ENCODE measurements at regions of chr5 and their contacts with region 1.

Region 1: DNA sequence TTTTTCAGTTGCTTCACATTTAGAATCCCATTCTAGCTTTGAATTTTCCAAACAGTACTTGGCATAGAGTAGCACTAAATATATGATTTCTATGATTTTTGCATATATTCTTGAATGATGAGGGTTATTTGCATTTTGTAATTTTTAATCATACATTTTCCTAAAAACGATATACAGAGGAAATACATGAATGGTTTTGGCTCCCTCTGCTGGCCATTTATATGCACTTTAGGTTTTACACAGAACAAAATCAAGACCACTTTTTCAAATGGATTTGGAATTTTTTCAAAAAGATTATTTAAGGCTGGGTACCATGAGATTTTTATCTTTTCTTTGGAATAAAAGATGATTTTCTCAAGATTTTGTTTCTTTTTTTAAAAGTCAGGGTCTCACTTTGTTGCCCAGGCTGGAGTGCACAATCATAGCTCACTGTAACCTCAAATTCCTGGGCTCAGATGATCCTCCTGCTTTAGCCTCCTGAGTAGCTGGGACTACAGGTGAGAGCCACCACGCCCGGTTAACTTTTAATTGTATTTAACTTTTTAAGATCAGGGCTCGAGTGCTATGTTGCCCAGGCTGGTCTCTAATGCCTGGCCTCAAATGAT is 16.7 kb upstream of the COMMD10 start:
- DNase-seq: peak; percentile 29 to 74 (median 36)
- ATAC-seq: peak; percentile 81
- H3K4me3 ChIP-seq: no peak overlapping the region
- H3K27ac ChIP-seq: no peak overlapping the region
- H3K4me1 ChIP-seq: no peaks in the 10 kb centered on the region
- H3K27me3 ChIP-seq: peaks cover 0 to 6% of the 10 kb centered on the region in 2 experiments; a peak in 2 of 5 replicates
- CTCF ChIP-seq: peak; percentile 45 to 83 (median 47); a peak in 4 of 6 replicates
- EP300 ChIP-seq: no peak
- POLR2A ChIP-seq: no peak
- RAD21 ChIP-seq: peak; percentile 85 to 86

Region 2: GRCh38 chr5:115309751-115310370 is 758.3 kb before region 1 on chr5:
- CTCF ChIA-PET with region 1: interaction called, 7 read pairs
- POLR2A ChIA-PET with region 1: no interaction called
- in situ Hi-C with region 1: no loop called
- intact Hi-C with region 1: loop called (anchors 5 kb)
- DNase-seq: peak in 3 of 4 experiments; percentile 12 to 49 (median 15)
- ATAC-seq: peak; percentile 70
- H3K4me3 ChIP-seq: no peak overlapping the region
- H3K27ac ChIP-seq: no peak overlapping the region
- H3K4me1 ChIP-seq: no peaks in the 10 kb centered on the region
- H3K27me3 ChIP-seq: no peaks in the 10 kb centered on the region
- CTCF ChIP-seq: peak in 1 of 3 experiments; percentile 70; a peak in 3 of 6 replicates
- EP300 ChIP-seq: no peak
- POLR2A ChIP-seq: no peak
- RAD21 ChIP-seq: peak; percentile 87 to 91

Region 3: DNA sequence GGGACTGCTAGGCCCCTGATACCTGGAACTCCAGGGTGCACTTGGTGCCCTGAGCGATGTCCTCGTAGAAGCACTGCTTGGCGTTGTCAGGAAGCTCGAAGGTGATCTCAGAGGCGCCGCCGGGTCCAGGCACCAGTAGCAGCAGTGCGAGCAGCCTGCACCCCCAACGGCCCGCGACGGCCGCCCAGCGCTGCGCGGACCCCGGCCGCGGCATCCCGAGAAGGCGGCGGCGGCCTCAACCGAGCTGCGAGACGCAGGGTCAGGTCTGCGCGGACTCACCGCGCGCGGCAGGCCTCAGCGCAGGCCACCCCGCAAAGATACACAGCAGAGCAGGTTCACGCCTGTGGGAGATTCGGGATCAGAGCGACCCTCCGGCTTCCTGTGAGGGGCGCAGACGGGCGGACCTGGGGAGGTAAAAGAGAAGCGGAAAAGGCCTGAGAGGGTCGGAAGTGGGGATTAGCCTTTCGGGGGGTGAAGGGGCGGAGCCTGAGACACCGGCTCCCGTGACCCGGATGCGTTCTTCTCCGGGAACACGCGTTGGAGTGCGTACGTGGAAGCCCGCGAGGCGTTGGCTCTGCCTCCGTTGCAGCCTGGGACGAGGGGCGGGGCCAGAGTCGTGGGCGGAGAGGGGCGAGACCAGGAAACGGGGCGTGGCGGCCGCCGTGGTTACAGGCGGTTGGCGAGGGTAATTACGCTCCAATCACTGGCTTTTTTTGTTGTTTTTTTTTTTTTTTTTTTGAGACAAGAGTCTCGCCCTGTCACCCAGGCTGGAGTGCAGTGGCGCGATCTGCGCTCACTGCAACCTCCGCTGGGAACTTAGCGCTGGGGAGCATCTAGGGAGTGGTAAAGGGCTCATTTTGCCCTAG is 442.3 kb before region 1 on chr5 and contains the start of gene TMED7:
- CTCF ChIA-PET with region 1: no interaction called
- POLR2A ChIA-PET with region 1: no interaction called
- in situ Hi-C with region 1: loop called (anchors 5 kb)
- intact Hi-C with region 1: no loop called
- DNase-seq: peak; percentile 93 to 99 (median 93)
- ATAC-seq: peak; percentile 94
- H3K4me3 ChIP-seq: peak within 1 kb of the TSS; percentile 95
- H3K27ac ChIP-seq: peak within 1 kb of the TSS; percentile 96
- H3K4me1 ChIP-seq: peaks cover 9 to 19% of the 10 kb centered on the region in 2 experiments; a peak in 4 of 5 replicates
- H3K27me3 ChIP-seq: no peaks in the 10 kb centered on the region
- CTCF ChIP-seq: no peak
- EP300 ChIP-seq: peak; percentile 31; the same call in 1 of the 2 replicates
- POLR2A ChIP-seq: peak; percentile 93
- RAD21 ChIP-seq: no peak
- polyA plus RNA-seq, gene TMED7: 15.9 to 16.5 TPM

Region 4: GRCh38 chr5:115841382-115842088 is 226.6 kb before region 1 on chr5 and contains the starts of genes AP3S1 and ATG12:
- CTCF ChIA-PET with region 1: no interaction called
- POLR2A ChIA-PET with region 1: no interaction called
- in situ Hi-C with region 1: no loop called
- intact Hi-C with region 1: loop called (anchors 5 kb)
- DNase-seq: peak; percentile 88 to 96 (median 92)
- ATAC-seq: peak; percentile 88
- H3K4me3 ChIP-seq: peak within 1 kb of the TSS; percentile 79
- H3K27ac ChIP-seq: peak within 1 kb of the TSS; percentile 99
- H3K4me1 ChIP-seq: peaks cover 14 to 15% of the 10 kb centered on the region in 2 experiments; a peak in 4 of 5 replicates
- H3K27me3 ChIP-seq: no peaks in the 10 kb centered on the region
- CTCF ChIP-seq: no peak
- EP300 ChIP-seq: no peak
- POLR2A ChIP-seq: peak; percentile 95
- RAD21 ChIP-seq: no peak
- polyA plus RNA-seq, gene AP3S1: 46.1 to 46.3 TPM
- polyA plus RNA-seq, gene ATG12: 99.6 to 114 TPM

Region 5: DNA sequence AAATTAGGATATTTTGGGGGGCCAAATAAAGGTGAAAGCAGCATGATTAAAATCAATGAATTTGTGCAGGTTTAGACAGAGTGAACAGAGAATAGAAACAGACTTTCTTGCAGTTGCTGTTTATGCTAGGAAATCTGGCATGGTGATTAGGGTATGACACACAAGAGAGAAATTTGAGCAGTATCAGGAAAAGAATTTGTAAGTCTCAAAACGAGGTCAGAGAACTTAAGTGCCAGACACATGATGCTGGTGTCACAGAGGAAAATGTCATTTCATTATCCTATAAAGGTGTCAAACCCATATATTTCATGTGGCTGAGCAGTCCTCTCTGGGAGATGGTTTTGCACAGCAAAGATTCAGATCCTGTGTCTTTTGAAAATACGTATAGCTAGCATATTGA is 90.1 kb before region 1 on chr5:
- CTCF ChIA-PET with region 1: no interaction called
- POLR2A ChIA-PET with region 1: no interaction called
- in situ Hi-C with region 1: no loop called
- intact Hi-C with region 1: loop called (anchors 10 kb)
- DNase-seq: no peak
- ATAC-seq: no peak
- H3K4me3 ChIP-seq: no peak overlapping the region
- H3K27ac ChIP-seq: no peak overlapping the region
- H3K4me1 ChIP-seq: no peaks in the 10 kb centered on the region
- H3K27me3 ChIP-seq: no peaks in the 10 kb centered on the region
- CTCF ChIP-seq: no peak
- EP300 ChIP-seq: no peak
- POLR2A ChIP-seq: no peak
- RAD21 ChIP-seq: no peak

Region 6: GRCh38 chr5:116696366-116696765 is 628.2 kb after region 1 on chr5:
- CTCF ChIA-PET with region 1: no interaction called
- POLR2A ChIA-PET with region 1: no interaction called
- in situ Hi-C with region 1: no loop called
- intact Hi-C with region 1: no loop called
- DNase-seq: no peak
- ATAC-seq: no peak
- H3K4me3 ChIP-seq: no peak overlapping the region
- H3K27ac ChIP-seq: no peak overlapping the region
- H3K4me1 ChIP-seq: no peaks in the 10 kb centered on the region
- H3K27me3 ChIP-seq: no peaks in the 10 kb centered on the region
- CTCF ChIP-seq: no peak
- EP300 ChIP-seq: no peak
- POLR2A ChIP-seq: no peak
- RAD21 ChIP-seq: no peak

Region 7: GRCh38 chr5:117020999-117021398 is 952.9 kb after region 1 on chr5:
- CTCF ChIA-PET with region 1: no interaction called
- POLR2A ChIA-PET with region 1: no interaction called
- in situ Hi-C with region 1: no loop called
- intact Hi-C with region 1: no loop called
- DNase-seq: no peak
- ATAC-seq: no peak
- H3K4me3 ChIP-seq: no peak overlapping the region
- H3K27ac ChIP-seq: no peak overlapping the region
- H3K4me1 ChIP-seq: no peaks in the 10 kb centered on the region
- H3K27me3 ChIP-seq: no peaks in the 10 kb centered on the region
- CTCF ChIP-seq: no peak
- EP300 ChIP-seq: no peak
- POLR2A ChIP-seq: no peak
- RAD21 ChIP-seq: no peak